Activated CD8-positive, alpha-beta T cell treated with anti-CD3 and anti-CD28 coated beads, Interleukin-2, amount 10 ng/mL, durations not matched to agents 7 days and 5 days (primary cell): ENCODE measurements at regions of chr1 and their contacts with region 1.

Region 1: GRCh38 chr1:10209905-10210810 is at the start of gene KIF1B:
- DNase-seq: peak; percentile 96
- ATAC-seq: peak; percentile 99
- H3K4me3 Mint-ChIP-seq: peak within 1 kb of the TSS; percentile 87
- H3K27ac Mint-ChIP-seq: peak within 1 kb of the TSS; percentile 74
- H3K4me1 Mint-ChIP-seq: peaks cover 27% of the 10 kb centered on the region
- H3K27me3 Mint-ChIP-seq: peaks cover 17% of the 10 kb centered on the region
- total RNA-seq, gene KIF1B: 9.2 to 9.6 TPM

Region 2: GRCh38 chr1:10101929-10102328 is 108.2 kb before region 1 on chr1:
- CTCF ChIA-PET with region 1: no interaction called
- POLR2A ChIA-PET with region 1: no interaction called
- DNase-seq: no peak
- ATAC-seq: no peak
- H3K4me3 Mint-ChIP-seq: no peak overlapping the region
- H3K27ac Mint-ChIP-seq: no peak overlapping the region
- H3K4me1 Mint-ChIP-seq: no peaks in the 10 kb centered on the region
- H3K27me3 Mint-ChIP-seq: no peaks in the 10 kb centered on the region

Region 3: DNA sequence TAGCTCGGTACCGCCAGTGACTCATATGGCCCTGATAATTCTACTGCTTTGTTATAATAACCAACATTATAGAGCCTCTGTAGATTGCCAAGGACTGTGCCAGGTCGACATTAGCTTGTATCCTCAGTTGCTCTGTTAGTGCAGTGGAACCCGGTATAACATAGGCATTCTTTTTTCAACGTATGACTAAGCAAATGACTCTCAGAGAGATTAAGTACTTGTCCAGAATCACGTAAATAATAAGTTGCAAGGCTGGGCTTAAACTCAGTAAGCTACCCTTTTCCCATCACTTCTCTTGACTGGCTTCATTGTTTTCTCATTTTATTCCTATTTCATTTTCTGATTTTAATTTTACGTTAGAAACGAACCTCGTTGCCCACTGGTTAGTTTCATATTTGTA is 92.3 kb before region 1 on chr1:
- CTCF ChIA-PET with region 1: no interaction called
- POLR2A ChIA-PET with region 1: no interaction called
- DNase-seq: no peak
- ATAC-seq: no peak
- H3K4me3 Mint-ChIP-seq: no peak overlapping the region
- H3K27ac Mint-ChIP-seq: no peak overlapping the region
- H3K4me1 Mint-ChIP-seq: no peaks in the 10 kb centered on the region
- H3K27me3 Mint-ChIP-seq: no peaks in the 10 kb centered on the region

Region 4: GRCh38 chr1:10186331-10187025 is 23.7 kb before region 1 on chr1:
- CTCF ChIA-PET with region 1: interaction called, 18 read pairs
- POLR2A ChIA-PET with region 1: interaction called, 3 read pairs
- DNase-seq: no peak
- ATAC-seq: peak; percentile 47
- H3K4me3 Mint-ChIP-seq: no peak overlapping the region
- H3K27ac Mint-ChIP-seq: no peak overlapping the region
- H3K4me1 Mint-ChIP-seq: peaks cover 5% of the 10 kb centered on the region
- H3K27me3 Mint-ChIP-seq: no peaks in the 10 kb centered on the region

Region 5: GRCh38 chr1:10225573-10225972 is 15.4 kb after region 1 on chr1:
- CTCF ChIA-PET with region 1: interaction called, 36 read pairs
- POLR2A ChIA-PET with region 1: no interaction called
- DNase-seq: no peak
- ATAC-seq: no peak
- H3K4me3 Mint-ChIP-seq: no peak overlapping the region
- H3K27ac Mint-ChIP-seq: no peak overlapping the region
- H3K4me1 Mint-ChIP-seq: no peaks in the 10 kb centered on the region
- H3K27me3 Mint-ChIP-seq: no peaks in the 10 kb centered on the region

Region 6: DNA sequence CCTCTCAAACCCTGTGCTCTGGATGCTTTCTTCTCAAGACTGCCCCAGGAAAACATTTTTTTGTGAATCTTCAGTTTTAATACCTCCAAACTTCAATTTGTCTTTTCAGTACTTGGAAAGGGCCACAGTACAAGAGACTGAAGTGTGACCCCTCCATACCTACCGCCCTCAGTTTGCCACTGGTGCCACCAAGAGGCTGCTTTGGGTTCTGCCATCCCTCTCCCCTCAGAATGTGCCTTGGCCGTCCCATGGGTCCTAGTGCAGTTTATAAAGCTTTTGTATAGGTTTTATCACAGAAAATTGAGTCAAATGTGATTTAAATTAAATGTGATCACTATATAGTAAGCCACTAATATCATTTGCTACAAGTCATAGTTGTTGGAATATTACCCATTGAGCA is 127.9 kb after region 1 on chr1:
- CTCF ChIA-PET with region 1: interaction called, 63 read pairs
- POLR2A ChIA-PET with region 1: no interaction called
- DNase-seq: peak; percentile 52
- ATAC-seq: peak; percentile 85
- H3K4me3 Mint-ChIP-seq: no peak overlapping the region
- H3K27ac Mint-ChIP-seq: no peak overlapping the region
- H3K4me1 Mint-ChIP-seq: no peaks in the 10 kb centered on the region
- H3K27me3 Mint-ChIP-seq: no peaks in the 10 kb centered on the region

Region 7: GRCh38 chr1:10430216-10431069 is 220.3 kb after region 1 on chr1 and contains the start of gene CENPS:
- CTCF ChIA-PET with region 1: interaction called, 37 read pairs
- POLR2A ChIA-PET with region 1: interaction called, 3 read pairs
- DNase-seq: peak; percentile 93
- ATAC-seq: peak; percentile 89
- H3K4me3 Mint-ChIP-seq: peak within 1 kb of the TSS; percentile 93
- H3K27ac Mint-ChIP-seq: peak within 1 kb of the TSS; percentile 95
- H3K4me1 Mint-ChIP-seq: peaks cover 27% of the 10 kb centered on the region
- H3K27me3 Mint-ChIP-seq: no peaks in the 10 kb centered on the region
- total RNA-seq, gene CENPS: 18.3 to 21.9 TPM